CD8-positive, alpha-beta T cell (primary cell): ENCODE measurements at regions of chr1 and their contacts with region 1.

Region 1: GRCh38 chr1:155934097-155934935 is at the start of gene KHDC4:
- DNase-seq: peak; percentile 88 to 100 (median 93)
- ATAC-seq: peak; percentile 92
- H3K4me3 ChIP-seq: peak within 1 kb of the TSS; percentile 83 to 96
- H3K4me3 Mint-ChIP-seq: no peak within 1 kb of the TSS
- H3K27ac ChIP-seq: peak within 1 kb of the TSS; percentile 89 to 98
- H3K27ac Mint-ChIP-seq: no peak within 1 kb of the TSS
- H3K4me1 ChIP-seq: peaks cover 39% of the 10 kb centered on the region
- H3K4me1 Mint-ChIP-seq: peaks cover 34% of the 10 kb centered on the region
- H3K27me3 ChIP-seq: no peaks in the 10 kb centered on the region
- H3K27me3 Mint-ChIP-seq: no peaks in the 10 kb centered on the region
- CTCF ChIP-seq: peak; percentile 32
- total RNA-seq, gene KHDC4: 47.4 to 54.6 TPM

Region 2: DNA sequence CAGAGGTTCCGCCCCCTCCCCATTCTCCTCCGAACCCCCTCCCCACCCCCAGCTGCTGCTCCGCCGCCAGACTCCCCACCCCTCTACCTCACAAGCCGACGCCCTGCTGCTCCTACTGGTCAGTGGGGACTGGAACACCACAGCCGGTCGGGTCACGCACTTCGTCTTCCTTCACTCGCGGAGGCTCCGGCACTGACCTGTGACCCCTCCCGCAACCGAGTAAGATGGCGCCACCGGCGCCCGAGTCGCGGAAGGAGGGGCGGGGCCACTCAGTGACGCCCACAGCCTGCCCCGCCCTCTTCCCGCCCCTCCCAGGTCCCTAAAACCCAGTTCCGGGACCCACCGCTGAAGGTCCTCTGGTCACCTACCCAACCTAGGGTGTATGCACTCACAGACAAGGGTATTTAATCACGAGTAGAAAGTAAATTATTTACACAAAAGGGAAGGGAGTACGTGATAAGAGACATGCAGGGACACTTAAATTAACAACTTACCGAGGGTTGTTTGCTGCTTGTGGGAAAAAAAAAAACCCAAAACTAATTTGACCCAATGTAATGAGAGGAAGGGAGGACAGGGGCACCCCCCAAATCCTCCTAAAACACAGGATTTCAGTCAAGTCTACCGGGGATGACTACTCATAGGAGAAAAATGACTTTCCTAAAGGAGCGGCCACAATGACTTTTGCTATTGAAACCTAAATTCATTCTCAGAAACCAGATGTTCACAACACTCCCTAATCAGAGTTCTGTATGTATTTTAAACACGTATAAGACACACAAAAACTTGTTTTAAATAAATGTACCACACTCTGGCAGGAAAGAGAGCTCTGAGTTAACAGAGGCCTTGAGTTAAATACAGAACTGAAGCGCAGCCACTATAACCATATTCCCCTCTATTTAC is 22.9 kb before region 1 on chr1 and contains the start of gene RIT1:
- CTCF ChIA-PET with region 1: interaction called, 3 read pairs
- POLR2A ChIA-PET with region 1: interaction called, 5 read pairs
- intact Hi-C with region 1: loop called (anchors 1 kb)
- DNase-seq: peak; percentile 62 to 93 (median 85)
- ATAC-seq: peak; percentile 97
- H3K4me3 ChIP-seq: peak within 1 kb of the TSS; percentile 68 to 72
- H3K4me3 Mint-ChIP-seq: peak within 1 kb of the TSS; percentile 97
- H3K27ac ChIP-seq: peak within 1 kb of the TSS; percentile 71 to 73
- H3K27ac Mint-ChIP-seq: peak within 1 kb of the TSS; percentile 98
- H3K4me1 ChIP-seq: peaks cover 21% of the 10 kb centered on the region
- H3K4me1 Mint-ChIP-seq: peaks cover 27% of the 10 kb centered on the region
- H3K27me3 ChIP-seq: no peaks in the 10 kb centered on the region
- H3K27me3 Mint-ChIP-seq: no peaks in the 10 kb centered on the region
- CTCF ChIP-seq: no peak
- total RNA-seq, gene RIT1: 79.6 to 85.0 TPM

Region 3: GRCh38 chr1:155946633-155947219 is 12.4 kb after region 1 on chr1:
- CTCF ChIA-PET with region 1: interaction called, 9 read pairs
- POLR2A ChIA-PET with region 1: interaction called, 18 read pairs
- intact Hi-C with region 1: loop called in 1 of 2 experiments (anchors 1 kb)
- DNase-seq: peak in 2 of 9 experiments; percentile 30 to 49
- ATAC-seq: no peak
- H3K4me3 ChIP-seq: no peak overlapping the region
- H3K4me3 Mint-ChIP-seq: no peak overlapping the region
- H3K27ac ChIP-seq: peak overlapping the region; percentile 44 to 81
- H3K27ac Mint-ChIP-seq: peak overlapping the region; percentile 95
- H3K4me1 ChIP-seq: peaks cover 31% of the 10 kb centered on the region
- H3K4me1 Mint-ChIP-seq: peaks cover 39% of the 10 kb centered on the region
- H3K27me3 ChIP-seq: no peaks in the 10 kb centered on the region
- H3K27me3 Mint-ChIP-seq: no peaks in the 10 kb centered on the region
- CTCF ChIP-seq: no peak

Region 4: GRCh38 chr1:155964193-155964592 is 29.9 kb after region 1 on chr1:
- CTCF ChIA-PET with region 1: interaction called, 6 read pairs
- POLR2A ChIA-PET with region 1: interaction called, 7 read pairs
- intact Hi-C with region 1: loop called in 1 of 2 experiments (anchors 1 kb)
- DNase-seq: no peak
- ATAC-seq: no peak
- H3K4me3 ChIP-seq: no peak overlapping the region
- H3K4me3 Mint-ChIP-seq: no peak overlapping the region
- H3K27ac ChIP-seq: no peak overlapping the region
- H3K27ac Mint-ChIP-seq: peak overlapping the region; percentile 62
- H3K4me1 ChIP-seq: peaks cover 40% of the 10 kb centered on the region
- H3K4me1 Mint-ChIP-seq: peaks cover 43% of the 10 kb centered on the region
- H3K27me3 ChIP-seq: no peaks in the 10 kb centered on the region
- H3K27me3 Mint-ChIP-seq: no peaks in the 10 kb centered on the region
- CTCF ChIP-seq: no peak

Region 5: DNA sequence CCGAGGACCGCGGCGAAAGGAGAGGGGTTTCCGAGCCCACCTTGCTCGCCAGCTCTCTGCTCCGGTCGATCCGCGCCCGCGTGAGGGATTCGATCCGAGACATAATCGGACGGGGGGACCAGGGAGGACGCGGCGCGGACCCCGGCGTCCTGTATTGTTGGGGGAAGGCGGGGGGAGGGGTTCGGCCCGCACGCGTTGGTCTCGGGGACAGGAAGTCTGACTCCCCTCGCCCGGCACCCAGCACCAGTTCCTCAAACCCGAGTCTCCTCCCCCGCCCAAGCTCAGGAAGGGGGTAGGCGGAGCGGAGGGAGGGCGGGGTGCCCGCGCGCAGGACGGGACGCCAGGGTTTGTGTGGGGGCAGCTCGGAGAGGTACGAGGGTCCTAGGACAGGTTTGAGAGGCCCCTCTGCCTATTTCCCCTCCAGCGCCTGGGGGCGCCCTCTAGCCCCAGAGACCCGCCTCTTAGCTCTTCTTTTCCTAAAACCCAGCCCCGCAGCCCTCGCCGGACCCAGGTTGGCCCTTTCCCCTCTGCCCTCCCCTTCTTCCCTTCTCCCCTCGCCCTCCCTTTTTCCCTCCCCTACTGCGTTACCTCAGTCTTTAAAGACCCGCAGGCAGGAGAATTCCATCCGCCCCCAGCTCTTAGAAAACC is 44.1 kb after region 1 on chr1 and contains the start of gene ARHGEF2:
- CTCF ChIA-PET with region 1: interaction called, 19 read pairs
- POLR2A ChIA-PET with region 1: interaction called, 25 read pairs
- intact Hi-C with region 1: loop called (anchors 1 to 2 kb)
- DNase-seq: peak; percentile 46 to 88 (median 79)
- ATAC-seq: peak; percentile 66
- H3K4me3 ChIP-seq: peak within 1 kb of the TSS; percentile 70 to 100
- H3K4me3 Mint-ChIP-seq: peak within 1 kb of the TSS; percentile 97
- H3K27ac ChIP-seq: peak within 1 kb of the TSS; percentile 59 to 91
- H3K27ac Mint-ChIP-seq: peak within 1 kb of the TSS; percentile 94
- H3K4me1 ChIP-seq: peaks cover 72% of the 10 kb centered on the region
- H3K4me1 Mint-ChIP-seq: peaks cover 69% of the 10 kb centered on the region
- H3K27me3 ChIP-seq: no peaks in the 10 kb centered on the region
- H3K27me3 Mint-ChIP-seq: no peaks in the 10 kb centered on the region
- CTCF ChIP-seq: no peak
- total RNA-seq, gene ARHGEF2: 51.6 to 52.3 TPM

Region 6: GRCh38 chr1:156020292-156021089 is 86.2 kb after region 1 on chr1 and contains the start of gene SSR2:
- CTCF ChIA-PET with region 1: interaction called, 3 read pairs
- POLR2A ChIA-PET with region 1: no interaction called
- intact Hi-C with region 1: loop called (anchors 1 kb)
- DNase-seq: peak; percentile 67 to 94 (median 84)
- ATAC-seq: peak; percentile 99
- H3K4me3 ChIP-seq: peak within 1 kb of the TSS; percentile 77 to 83
- H3K4me3 Mint-ChIP-seq: peak within 1 kb of the TSS; percentile 98
- H3K27ac ChIP-seq: peak within 1 kb of the TSS; percentile 61 to 64
- H3K27ac Mint-ChIP-seq: peak within 1 kb of the TSS; percentile 96
- H3K4me1 ChIP-seq: peaks cover 15% of the 10 kb centered on the region
- H3K4me1 Mint-ChIP-seq: peaks cover 30% of the 10 kb centered on the region
- H3K27me3 ChIP-seq: peaks cover 0 to 5% of the 10 kb centered on the region in 2 experiments
- H3K27me3 Mint-ChIP-seq: peaks cover 2% of the 10 kb centered on the region
- CTCF ChIP-seq: no peak
- total RNA-seq, gene SSR2: 208 to 212 TPM

Region 7: GRCh38 chr1:156226116-156226538 is 291.8 kb after region 1 on chr1:
- CTCF ChIA-PET with region 1: no interaction called
- POLR2A ChIA-PET with region 1: no interaction called
- intact Hi-C with region 1: no loop called
- DNase-seq: no peak
- ATAC-seq: no peak
- H3K4me3 ChIP-seq: no peak overlapping the region
- H3K4me3 Mint-ChIP-seq: no peak overlapping the region
- H3K27ac ChIP-seq: peak overlapping the region in 1 of 2 experiments; percentile 3
- H3K27ac Mint-ChIP-seq: no peak overlapping the region
- H3K4me1 ChIP-seq: no peaks in the 10 kb centered on the region
- H3K4me1 Mint-ChIP-seq: peaks cover 16% of the 10 kb centered on the region
- H3K27me3 ChIP-seq: no peaks in the 10 kb centered on the region
- H3K27me3 Mint-ChIP-seq: no peaks in the 10 kb centered on the region
- CTCF ChIP-seq: no peak